Activated naive CD4-positive, alpha-beta T cell treated with anti-CD3 and anti-CD28 coated beads, Interleukin-2, amount 10 ng/mL, durations not matched to agents 7 days and 5 days (primary cell): ENCODE measurements at regions of chr6 and their contacts with region 1.

Region 1: GRCh38 chr6:40550202-40551101 is 36.7 kb downstream of the LRFN2 start:
- DNase-seq: peak; percentile 43
- H3K4me3 Mint-ChIP-seq: no peak overlapping the region
- H3K27ac Mint-ChIP-seq: no peak overlapping the region
- H3K4me1 Mint-ChIP-seq: no peaks in the 10 kb centered on the region
- H3K27me3 Mint-ChIP-seq: no peaks in the 10 kb centered on the region

Region 2: GRCh38 chr6:40912158-40912946 is 361.9 kb after region 1 on chr6:
- CTCF ChIA-PET with region 1: interaction called, 10 read pairs
- DNase-seq: peak; percentile 62
- H3K4me3 Mint-ChIP-seq: no peak overlapping the region
- H3K27ac Mint-ChIP-seq: no peak overlapping the region
- H3K4me1 Mint-ChIP-seq: no peaks in the 10 kb centered on the region
- H3K27me3 Mint-ChIP-seq: peaks cover 26% of the 10 kb centered on the region